ENCODE measurements at regions of chr18 and their contacts with region 1.

Region 1: DNA sequence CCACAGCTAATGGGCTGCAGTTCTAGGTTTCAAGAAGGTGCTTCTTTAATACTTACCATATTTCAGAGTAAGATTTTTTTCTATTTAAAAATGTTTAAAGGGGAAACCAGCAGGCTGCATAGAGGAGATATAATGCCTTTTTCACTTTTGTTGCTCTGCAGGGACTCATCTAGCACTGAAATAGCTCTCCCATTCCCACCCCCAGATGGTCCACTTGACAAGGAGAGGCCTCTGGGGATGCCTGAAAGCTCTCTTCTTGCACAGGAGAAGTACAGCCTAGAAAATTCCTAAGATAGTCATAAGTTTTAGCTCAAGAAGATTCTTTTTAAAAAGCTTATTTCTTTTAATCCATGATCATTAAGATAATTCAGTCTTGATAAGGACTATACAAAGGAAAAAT is 126.4 kb downstream of the CDH2 start:
- DNase-seq: no peak
- ATAC-seq: no peak
- H3K4me3 ChIP-seq: no peak overlapping the region
- H3K27ac ChIP-seq: no peak overlapping the region
- H3K4me1 ChIP-seq: peaks cover 0 to 49% (median 7%) of the 10 kb centered on the region in 12 donors
- H3K27me3 ChIP-seq: no peaks in the 10 kb centered on the region
- CTCF ChIP-seq: no peak
- POLR2A ChIP-seq: no peak

Region 2: DNA sequence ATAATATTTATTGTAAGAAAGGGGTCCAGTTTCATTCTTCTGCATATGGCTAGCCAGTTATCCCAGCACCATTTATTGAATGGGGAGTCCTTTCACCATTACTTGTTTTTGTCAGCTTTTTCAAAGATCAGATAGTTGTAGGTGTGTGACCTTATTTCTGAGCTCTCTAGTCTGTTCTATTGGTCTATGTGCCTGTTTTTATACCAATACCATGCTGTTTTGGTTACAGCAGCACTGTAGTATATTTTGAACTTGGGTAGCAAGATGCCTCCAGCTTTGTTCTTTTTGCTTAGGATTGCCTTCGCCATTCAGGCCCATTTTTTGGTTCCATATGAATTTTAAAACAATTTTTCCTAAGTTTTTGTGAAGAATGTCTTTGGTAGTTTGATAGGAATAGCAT is 193.7 kb before region 1 on chr18:
- intact Hi-C with region 1: no loop called
- DNase-seq: no peak
- ATAC-seq: no peak
- H3K4me3 ChIP-seq: no peak overlapping the region
- H3K27ac ChIP-seq: no peak overlapping the region
- H3K4me1 ChIP-seq: peaks cover 0 to 17% (median 0%) of the 10 kb centered on the region in 12 donors
- H3K27me3 ChIP-seq: no peaks in the 10 kb centered on the region
- CTCF ChIP-seq: no peak
- POLR2A ChIP-seq: no peak

Region 3: DNA sequence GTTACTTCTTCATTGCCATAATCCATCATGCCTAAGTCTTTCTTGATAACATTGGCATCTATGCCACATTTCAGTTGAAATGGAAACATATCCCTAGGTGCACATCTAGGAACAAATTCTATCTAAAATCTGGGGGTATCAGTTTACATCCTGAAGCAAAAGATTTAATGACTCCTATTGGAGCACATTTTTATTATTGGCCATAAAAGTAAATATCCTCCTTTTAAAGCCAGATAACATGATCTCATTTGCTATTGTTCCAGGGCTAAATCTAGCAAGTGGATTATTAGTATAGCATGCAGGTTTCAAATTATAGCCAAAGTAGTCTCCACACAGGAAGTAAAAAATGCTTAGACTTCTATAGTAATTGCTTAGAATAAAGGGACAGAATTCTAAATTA is 66.8 kb before region 1 on chr18:
- intact Hi-C with region 1: loop called in 1 of 10 experiments (anchors 10 kb)
- DNase-seq: no peak
- ATAC-seq: no peak
- H3K4me3 ChIP-seq: no peak overlapping the region
- H3K27ac ChIP-seq: no peak overlapping the region
- H3K4me1 ChIP-seq: peaks cover 0 to 4% (median 0%) of the 10 kb centered on the region in 12 donors
- H3K27me3 ChIP-seq: no peaks in the 10 kb centered on the region
- CTCF ChIP-seq: no peak
- POLR2A ChIP-seq: no peak

Region 4: GRCh38 chr18:28071199-28071598 is 20.7 kb after region 1 on chr18:
- intact Hi-C with region 1: loop called in 1 of 10 experiments (anchors 2 kb)
- DNase-seq: no peak
- ATAC-seq: peak in 2 of 4 donors; percentile 23 to 33
- H3K4me3 ChIP-seq: no peak overlapping the region
- H3K27ac ChIP-seq: peak overlapping the region in 3 of 12 donors; percentile 11 to 41 (median 33)
- H3K4me1 ChIP-seq: peaks cover 0 to 52% (median 10%) of the 10 kb centered on the region in 12 donors
- H3K27me3 ChIP-seq: no peaks in the 10 kb centered on the region
- CTCF ChIP-seq: no peak
- POLR2A ChIP-seq: no peak

Region 5: GRCh38 chr18:28081516-28081915 is 31.0 kb after region 1 on chr18:
- intact Hi-C with region 1: no loop called
- DNase-seq: no peak
- ATAC-seq: no peak
- H3K4me3 ChIP-seq: no peak overlapping the region
- H3K27ac ChIP-seq: no peak overlapping the region
- H3K4me1 ChIP-seq: peaks cover 0 to 60% (median 18%) of the 10 kb centered on the region in 12 donors
- H3K27me3 ChIP-seq: no peaks in the 10 kb centered on the region
- CTCF ChIP-seq: no peak
- POLR2A ChIP-seq: no peak

Region 6: GRCh38 chr18:28115149-28115550 is 64.6 kb after region 1 on chr18:
- intact Hi-C with region 1: loop called in 1 of 10 experiments (anchors 10 kb)
- DNase-seq: no peak
- ATAC-seq: no peak
- H3K4me3 ChIP-seq: no peak overlapping the region
- H3K27ac ChIP-seq: peak overlapping the region in 10 of 12 donors; percentile 15 to 97 (median 86)
- H3K4me1 ChIP-seq: peaks cover 0 to 69% (median 17%) of the 10 kb centered on the region in 12 donors
- H3K27me3 ChIP-seq: no peaks in the 10 kb centered on the region
- CTCF ChIP-seq: no peak
- POLR2A ChIP-seq: no peak

Measured in heart left ventricle (tissue), 16 donors.